Psoas muscle (tissue), 8 donors: ENCODE measurements at regions of chr22 and their contacts with region 1.

Region 1: GRCh38 chr22:17910561-17911311 is 113.6 kb downstream of the MICAL3 start:
- DNase-seq: peak; percentile 86 to 93
- ATAC-seq: peak; percentile 83 to 89 (median 86)
- H3K4me3 ChIP-seq: peak overlapping the region; percentile 27
- H3K27ac ChIP-seq: peak overlapping the region; percentile 94
- H3K4me1 ChIP-seq: peaks cover 69% of the 10 kb centered on the region
- H3K27me3 ChIP-seq: no peaks in the 10 kb centered on the region
- CTCF ChIP-seq: peak; percentile 23

Region 2: GRCh38 chr22:17773606-17774205 is 137.0 kb before region 1 on chr22:
- intact Hi-C with region 1: no loop called
- DNase-seq: peak; percentile 42 to 71
- ATAC-seq: peak; percentile 40 to 69 (median 62)
- H3K4me3 ChIP-seq: peak overlapping the region; percentile 78
- H3K27ac ChIP-seq: no peak overlapping the region
- H3K4me1 ChIP-seq: peaks cover 9% of the 10 kb centered on the region
- H3K27me3 ChIP-seq: no peaks in the 10 kb centered on the region
- CTCF ChIP-seq: no peak

Region 3: DNA sequence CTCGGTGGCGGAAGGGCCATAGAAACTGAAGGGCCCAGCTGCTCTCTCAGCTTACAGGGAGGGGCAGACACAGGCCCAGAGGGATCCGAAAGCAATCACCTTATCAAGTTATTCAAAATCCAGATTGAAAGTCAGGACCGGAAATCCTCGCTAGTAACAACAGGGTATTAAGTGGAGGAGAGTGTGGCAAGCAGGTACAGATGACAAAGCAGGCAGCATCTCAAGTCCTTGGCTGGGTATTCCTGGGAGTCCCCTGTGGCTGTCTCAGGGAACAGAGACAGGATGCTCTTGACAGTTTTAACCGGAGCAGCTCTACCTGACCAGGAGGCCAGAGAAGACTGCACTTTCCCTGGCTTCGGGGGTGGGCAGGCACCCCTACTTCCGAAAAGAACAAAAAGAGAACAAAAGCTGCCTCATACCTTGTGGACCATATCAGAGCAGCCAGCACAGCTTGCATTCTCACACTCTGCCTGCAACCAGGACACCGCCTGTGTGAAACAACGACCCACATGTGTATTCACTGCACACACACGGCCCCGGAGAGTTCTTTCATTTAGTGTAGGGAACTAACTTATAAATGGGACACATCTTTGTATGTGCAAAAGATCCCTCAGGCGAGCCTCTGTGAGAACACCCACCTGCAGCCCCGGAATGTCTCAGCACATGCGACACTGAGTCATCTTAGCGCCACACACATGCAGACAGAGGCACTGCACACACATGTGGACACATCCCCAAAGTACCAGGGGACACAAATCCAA is 35.3 kb after region 1 on chr22:
- intact Hi-C with region 1: loop called (anchors 5 kb)
- DNase-seq: no peak
- ATAC-seq: no peak
- H3K4me3 ChIP-seq: no peak overlapping the region
- H3K27ac ChIP-seq: peak overlapping the region; percentile 31
- H3K4me1 ChIP-seq: peaks cover 82% of the 10 kb centered on the region
- H3K27me3 ChIP-seq: no peaks in the 10 kb centered on the region
- CTCF ChIP-seq: no peak

Region 4: GRCh38 chr22:18001040-18001893 is 90.5 kb after region 1 on chr22:
- intact Hi-C with region 1: loop called in 1 of 2 experiments (anchors 5 kb)
- DNase-seq: peak; percentile 90 to 95
- ATAC-seq: peak; percentile 94 to 96 (median 96)
- H3K4me3 ChIP-seq: peak overlapping the region; percentile 94
- H3K27ac ChIP-seq: peak overlapping the region; percentile 95
- H3K4me1 ChIP-seq: peaks cover 11% of the 10 kb centered on the region
- H3K27me3 ChIP-seq: no peaks in the 10 kb centered on the region
- CTCF ChIP-seq: peak; percentile 64

Region 5: DNA sequence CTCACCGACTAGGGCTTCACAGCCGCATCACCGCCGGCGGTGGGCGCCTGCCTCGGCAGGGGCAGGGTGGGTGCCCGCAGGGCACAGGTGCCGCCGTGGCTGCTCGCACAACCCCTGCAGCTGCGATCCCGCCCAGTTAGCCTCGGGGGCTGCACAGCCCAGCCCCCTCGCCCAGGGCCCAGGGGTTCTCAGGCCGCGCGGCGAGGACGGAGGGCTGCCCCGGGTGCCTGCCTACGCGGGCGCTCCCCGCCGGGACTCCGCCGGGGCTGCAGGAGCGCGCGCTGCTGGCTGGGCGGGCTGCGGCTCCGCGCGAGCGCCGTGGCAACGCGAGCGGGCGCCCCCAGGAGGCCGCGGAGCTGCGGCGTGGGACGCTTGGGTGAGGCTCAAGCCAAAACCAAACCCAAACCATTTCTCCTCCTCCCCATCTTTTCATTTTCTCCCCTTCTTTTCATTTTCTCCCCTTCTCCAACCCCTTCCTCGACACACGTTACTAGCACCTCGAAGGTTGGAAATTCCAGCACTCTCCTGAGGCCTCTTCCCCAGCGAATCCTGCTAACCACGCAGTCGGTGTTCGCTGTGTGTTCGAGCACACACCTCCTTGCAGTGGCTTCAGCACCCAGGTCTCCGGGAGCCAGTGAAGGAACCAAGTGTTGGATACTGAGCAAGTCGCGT is 113.7 kb after region 1 on chr22 and contains the start of gene MICAL3:
- intact Hi-C with region 1: loop called (anchors 2 to 5 kb)
- DNase-seq: peak; percentile 62 to 79
- ATAC-seq: peak; percentile 71 to 76 (median 73)
- H3K4me3 ChIP-seq: peak within 1 kb of the TSS; percentile 67
- H3K27ac ChIP-seq: peak within 1 kb of the TSS; percentile 80
- H3K4me1 ChIP-seq: peaks cover 22% of the 10 kb centered on the region
- H3K27me3 ChIP-seq: no peaks in the 10 kb centered on the region
- CTCF ChIP-seq: peak; percentile 72
- total RNA-seq, gene MICAL3: 15.5 to 38.3 (median 27.1) TPM